Dendritic cell treated with granulocyte-macrophage colony-stimulating factor and Interleukin-4, amounts not matched to agents 40 ng/mL and 50 ng/mL, for 4 days (primary cell): ENCODE measurements at regions of chr7 and their contacts with region 1.

Region 1: GRCh38 chr7:32942786-32943653 is 14.2 kb upstream of the FKBP9 start:
- H3K4me3 Mint-ChIP-seq: peak overlapping the region; percentile 99
- H3K27ac Mint-ChIP-seq: peak overlapping the region; percentile 93
- H3K4me1 Mint-ChIP-seq: peaks cover 31% of the 10 kb centered on the region
- H3K27me3 Mint-ChIP-seq: no peaks in the 10 kb centered on the region

Region 2: DNA sequence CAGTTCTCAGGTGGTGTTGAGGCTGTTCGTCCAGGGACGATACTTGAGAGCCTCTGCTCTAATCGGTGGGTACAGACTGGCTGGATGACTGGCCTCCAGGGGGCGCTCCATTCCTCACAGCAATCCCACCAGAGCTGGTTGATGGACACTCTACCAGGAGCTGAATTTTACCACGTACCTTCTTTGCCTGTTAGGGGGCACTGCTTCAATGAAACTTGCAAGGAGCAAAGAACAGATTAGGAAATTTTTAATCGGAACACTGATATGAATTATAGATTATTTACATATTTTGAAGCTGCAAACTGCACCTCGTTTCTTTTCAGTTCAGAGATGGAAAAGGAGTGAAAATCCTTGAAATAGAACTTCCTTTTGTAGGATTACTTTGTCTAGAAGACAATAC is 96.3 kb before region 1 on chr7:
- intact Hi-C with region 1: loop called (anchors 2 kb)
- H3K4me3 Mint-ChIP-seq: peak overlapping the region; percentile 48
- H3K27ac Mint-ChIP-seq: no peak overlapping the region
- H3K4me1 Mint-ChIP-seq: no peaks in the 10 kb centered on the region
- H3K27me3 Mint-ChIP-seq: no peaks in the 10 kb centered on the region

Region 3: GRCh38 chr7:32891800-32892520 is 51.1 kb before region 1 on chr7:
- intact Hi-C with region 1: loop called (anchors 1 kb)
- H3K4me3 Mint-ChIP-seq: peak overlapping the region; percentile 88
- H3K27ac Mint-ChIP-seq: peak overlapping the region; percentile 100
- H3K4me1 Mint-ChIP-seq: peaks cover 48% of the 10 kb centered on the region
- H3K27me3 Mint-ChIP-seq: no peaks in the 10 kb centered on the region

Region 4: DNA sequence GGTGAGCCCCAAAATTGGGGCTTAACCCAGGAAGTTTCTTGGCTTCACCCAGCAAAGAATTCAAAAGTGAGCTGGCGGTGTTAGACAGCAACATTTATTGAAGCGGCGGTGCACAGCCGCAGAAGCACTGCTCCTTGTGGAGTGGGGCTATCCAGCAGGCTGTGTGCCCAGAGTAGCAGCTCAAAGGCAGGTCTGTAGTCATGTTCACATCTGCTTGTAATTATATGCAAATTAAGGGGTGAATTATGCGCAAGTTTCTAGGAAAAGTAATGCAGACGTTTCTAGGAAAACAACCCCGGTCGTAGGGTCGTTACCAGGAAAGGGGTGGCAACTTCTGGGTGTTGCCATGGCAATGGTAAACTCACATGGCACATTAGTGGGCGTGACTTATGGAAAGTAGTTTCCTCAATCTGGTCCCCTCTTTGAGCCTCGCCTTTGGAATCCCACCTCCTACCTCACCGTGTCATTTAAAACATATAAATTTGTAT is 37.8 kb before region 1 on chr7:
- intact Hi-C with region 1: loop called (anchors 5 kb)
- H3K4me3 Mint-ChIP-seq: peak overlapping the region; percentile 52
- H3K27ac Mint-ChIP-seq: peak overlapping the region; percentile 79
- H3K4me1 Mint-ChIP-seq: peaks cover 13% of the 10 kb centered on the region
- H3K27me3 Mint-ChIP-seq: no peaks in the 10 kb centered on the region

Region 5: DNA sequence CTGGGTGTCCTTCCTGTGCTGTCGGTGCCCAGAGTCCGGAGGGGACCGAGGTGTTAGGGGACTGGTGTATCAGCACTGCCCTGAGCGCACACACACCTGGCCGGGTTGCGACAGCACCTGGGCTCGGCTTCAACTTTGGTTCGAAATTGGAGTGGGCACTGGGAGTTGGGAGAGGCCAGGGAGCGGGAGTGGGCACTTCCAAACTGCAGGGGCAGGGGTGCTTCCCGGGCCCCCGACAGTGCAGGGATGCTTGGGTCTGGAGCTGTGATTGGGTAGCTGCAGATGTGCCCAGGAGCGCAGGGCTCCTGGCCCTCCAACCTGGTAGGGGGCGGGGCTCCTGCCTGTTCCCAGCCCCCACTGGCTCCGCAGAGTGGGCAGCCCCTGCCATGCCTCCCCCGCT is 194.1 kb after region 1 on chr7:
- intact Hi-C with region 1: no loop called
- H3K4me3 Mint-ChIP-seq: no peak overlapping the region
- H3K27ac Mint-ChIP-seq: no peak overlapping the region
- H3K4me1 Mint-ChIP-seq: no peaks in the 10 kb centered on the region
- H3K27me3 Mint-ChIP-seq: no peaks in the 10 kb centered on the region